Endothelial cell of umbilical vein (primary cell): ENCODE measurements at regions of chr7 and their contacts with region 1.

Region 1: GRCh38 chr7:23357190-23358093 is 58.3 kb downstream of the MALSU1 start:
- DNase-seq: peak; percentile 81
- H3K4me3 ChIP-seq: peak overlapping the region in 1 of 3 experiments; percentile 44
- H3K27ac ChIP-seq: peak overlapping the region; percentile 53
- H3K4me1 ChIP-seq: peaks cover 44% of the 10 kb centered on the region
- H3K27me3 ChIP-seq: no peaks in the 10 kb centered on the region
- CTCF ChIP-seq: peak; percentile 7
- POLR2A ChIP-seq: peak; percentile 18

Region 2: GRCh38 chr7:23334482-23335056 is 22.9 kb before region 1 on chr7:
- CTCF ChIA-PET with region 1: interaction called, 10 read pairs
- POLR2A ChIA-PET with region 1: no interaction called
- dilution Hi-C with region 1: no loop called
- intact Hi-C with region 1: loop called (anchors 1 kb)
- DNase-seq: peak; percentile 99
- H3K4me3 ChIP-seq: no peak overlapping the region
- H3K27ac ChIP-seq: peak overlapping the region; percentile 93
- H3K4me1 ChIP-seq: peaks cover 46% of the 10 kb centered on the region
- H3K27me3 ChIP-seq: no peaks in the 10 kb centered on the region
- CTCF ChIP-seq: no peak
- POLR2A ChIP-seq: peak; percentile 76

Region 3: GRCh38 chr7:23380961-23381360 is 23.5 kb after region 1 on chr7:
- CTCF ChIA-PET with region 1: interaction called, 12 read pairs
- POLR2A ChIA-PET with region 1: no interaction called
- dilution Hi-C with region 1: no loop called
- intact Hi-C with region 1: no loop called
- DNase-seq: no peak
- H3K4me3 ChIP-seq: no peak overlapping the region
- H3K27ac ChIP-seq: peak overlapping the region; percentile 34
- H3K4me1 ChIP-seq: peaks cover 40% of the 10 kb centered on the region
- H3K27me3 ChIP-seq: no peaks in the 10 kb centered on the region
- CTCF ChIP-seq: no peak
- POLR2A ChIP-seq: no peak

Region 4: DNA sequence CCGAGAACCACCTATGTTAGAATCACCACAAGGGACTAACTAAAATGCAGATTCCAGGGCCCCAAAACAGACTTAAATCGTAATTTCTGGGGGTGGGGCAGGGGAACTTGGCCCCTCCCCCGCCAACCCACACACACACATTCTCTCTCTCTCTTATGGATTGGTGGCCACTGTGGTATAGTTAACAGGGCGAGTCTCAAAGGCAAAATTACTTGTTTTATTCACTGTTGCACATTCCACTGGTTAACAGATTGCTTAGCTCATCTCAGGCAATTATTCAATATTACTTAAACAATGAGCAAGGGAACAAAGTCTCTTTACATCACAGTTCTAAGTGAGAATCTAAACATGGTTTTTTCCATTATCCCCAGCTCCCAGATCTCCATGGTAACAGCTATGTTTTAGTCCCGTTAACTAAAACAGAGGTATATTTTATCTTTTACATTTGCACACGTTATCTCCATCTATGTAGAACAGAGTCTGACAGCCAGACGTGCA is 74.3 kb after region 1 on chr7:
- CTCF ChIA-PET with region 1: interaction called, 37 read pairs
- POLR2A ChIA-PET with region 1: no interaction called
- dilution Hi-C with region 1: no loop called
- intact Hi-C with region 1: loop called (anchors 2 kb)
- DNase-seq: no peak
- H3K4me3 ChIP-seq: no peak overlapping the region
- H3K27ac ChIP-seq: peak overlapping the region; percentile 49
- H3K4me1 ChIP-seq: peaks cover 22% of the 10 kb centered on the region
- H3K27me3 ChIP-seq: no peaks in the 10 kb centered on the region
- CTCF ChIP-seq: no peak
- POLR2A ChIP-seq: no peak

Region 5: DNA sequence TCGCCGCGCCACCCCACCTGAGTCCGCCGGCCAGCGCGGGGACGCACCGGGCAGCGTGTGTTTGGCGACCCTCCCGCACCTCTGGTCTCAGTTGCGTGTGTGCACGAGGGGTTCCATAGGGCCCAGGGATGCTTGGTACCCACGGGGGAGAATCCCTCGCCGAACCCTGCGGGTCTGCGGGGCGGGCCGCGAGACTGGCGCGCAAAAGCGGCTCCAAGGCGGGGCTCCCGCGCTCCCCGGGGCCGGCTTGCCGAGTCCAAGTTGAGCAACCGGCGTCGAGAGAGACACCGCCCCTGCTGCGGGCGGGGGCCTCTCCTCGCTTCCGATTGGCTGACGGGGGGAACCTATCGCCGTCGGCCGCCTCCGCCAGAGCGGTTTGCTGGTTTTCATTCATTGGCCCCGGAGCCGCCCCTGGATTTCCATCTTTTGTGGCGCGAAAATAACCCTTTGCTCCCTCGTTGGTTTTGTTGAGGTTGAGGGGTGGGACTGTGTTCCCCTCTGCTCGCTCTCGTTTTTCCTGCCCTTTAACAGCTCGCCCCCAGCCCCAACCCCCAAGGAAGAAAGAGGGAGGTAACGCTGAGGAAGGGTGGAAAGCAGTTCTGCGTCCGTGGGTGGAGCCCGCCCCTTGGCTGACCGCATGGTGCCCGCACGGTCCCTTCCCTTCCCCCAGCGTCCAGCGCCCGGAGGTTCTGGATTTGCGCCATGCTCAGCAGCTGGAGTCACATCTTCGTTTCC is 116.8 kb after region 1 on chr7:
- CTCF ChIA-PET with region 1: interaction called, 12 read pairs
- POLR2A ChIA-PET with region 1: no interaction called
- dilution Hi-C with region 1: no loop called
- intact Hi-C with region 1: loop called (anchors 1 kb)
- DNase-seq: peak; percentile 95
- H3K4me3 ChIP-seq: peak overlapping the region; percentile 11 to 74 (median 50)
- H3K27ac ChIP-seq: peak overlapping the region; percentile 29
- H3K4me1 ChIP-seq: peaks cover 19% of the 10 kb centered on the region
- H3K27me3 ChIP-seq: peaks cover 27 to 46% of the 10 kb centered on the region in 2 experiments
- CTCF ChIP-seq: no peak
- POLR2A ChIP-seq: peak; percentile 68

Region 6: DNA sequence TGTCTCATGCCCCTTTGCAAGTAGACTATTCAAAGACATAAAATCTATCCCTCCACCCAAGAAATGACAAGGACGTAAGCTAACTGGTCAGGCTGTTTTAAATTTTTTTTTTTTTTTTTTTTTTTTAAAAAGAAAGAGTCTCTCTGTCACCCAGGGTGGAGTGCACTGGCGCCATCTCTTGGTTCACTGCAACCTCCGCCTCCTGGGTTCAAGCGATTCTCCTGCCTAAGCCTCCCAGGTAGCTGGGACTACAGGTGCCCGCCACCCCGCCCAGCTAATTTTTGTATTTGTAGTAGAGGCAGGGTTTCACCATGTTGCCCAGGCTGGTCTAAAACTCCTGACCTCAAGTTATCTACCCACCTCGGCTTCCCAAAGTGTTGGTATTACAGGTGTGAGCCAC is 163.1 kb after region 1 on chr7:
- CTCF ChIA-PET with region 1: interaction called, 3 read pairs
- POLR2A ChIA-PET with region 1: no interaction called
- dilution Hi-C with region 1: no loop called
- intact Hi-C with region 1: loop called (anchors 2 kb)
- DNase-seq: no peak
- H3K4me3 ChIP-seq: no peak overlapping the region
- H3K27ac ChIP-seq: no peak overlapping the region
- H3K4me1 ChIP-seq: no peaks in the 10 kb centered on the region
- H3K27me3 ChIP-seq: no peaks in the 10 kb centered on the region
- CTCF ChIP-seq: peak in 1 of 2 donors; percentile 7
- POLR2A ChIP-seq: no peak

Region 7: DNA sequence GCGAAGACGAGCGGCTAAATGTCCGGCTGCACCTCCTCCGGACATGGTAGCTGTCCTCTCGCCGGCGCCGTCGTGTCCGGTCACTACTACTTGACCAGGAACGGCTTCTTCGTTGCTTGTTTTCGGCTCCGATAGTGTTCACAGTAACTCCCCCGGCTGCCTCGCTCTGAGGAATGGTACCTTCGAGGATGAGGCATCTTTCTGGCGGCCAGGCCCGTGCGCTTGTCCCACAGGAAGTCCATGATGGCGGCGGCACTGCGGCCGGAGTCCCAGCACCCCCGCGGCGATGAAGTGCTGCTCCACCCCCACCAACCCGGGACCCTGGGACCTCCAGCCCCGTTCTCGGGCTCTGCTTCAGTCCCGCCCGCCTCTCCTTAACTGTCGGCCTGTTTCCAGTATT is 228.7 kb after region 1 on chr7:
- CTCF ChIA-PET with region 1: no interaction called
- POLR2A ChIA-PET with region 1: no interaction called
- dilution Hi-C with region 1: no loop called
- intact Hi-C with region 1: no loop called
- DNase-seq: no peak
- H3K4me3 ChIP-seq: no peak overlapping the region
- H3K27ac ChIP-seq: no peak overlapping the region
- H3K4me1 ChIP-seq: no peaks in the 10 kb centered on the region
- H3K27me3 ChIP-seq: no peaks in the 10 kb centered on the region
- CTCF ChIP-seq: no peak
- POLR2A ChIP-seq: no peak

Region 8: GRCh38 chr7:23604296-23604640 is 246.8 kb after region 1 on chr7:
- CTCF ChIA-PET with region 1: no interaction called
- POLR2A ChIA-PET with region 1: no interaction called
- dilution Hi-C with region 1: no loop called
- intact Hi-C with region 1: no loop called
- DNase-seq: no peak
- H3K4me3 ChIP-seq: no peak overlapping the region
- H3K27ac ChIP-seq: no peak overlapping the region
- H3K4me1 ChIP-seq: no peaks in the 10 kb centered on the region
- H3K27me3 ChIP-seq: no peaks in the 10 kb centered on the region
- CTCF ChIP-seq: no peak
- POLR2A ChIP-seq: no peak